ENCODE measurements at regions of chr10 and their contacts with region 1.

Region 1: GRCh38 chr10:116170815-116171250 is 102.2 kb downstream of the GFRA1 start:
- DNase-seq: no peak
- H3K4me3 ChIP-seq: no peak overlapping the region
- H3K27ac ChIP-seq: no peak overlapping the region
- H3K4me1 ChIP-seq: no peaks in the 10 kb centered on the region
- H3K27me3 ChIP-seq: no peaks in the 10 kb centered on the region
- CTCF ChIP-seq: no peak
- POLR2A ChIP-seq: no peak

Region 2: DNA sequence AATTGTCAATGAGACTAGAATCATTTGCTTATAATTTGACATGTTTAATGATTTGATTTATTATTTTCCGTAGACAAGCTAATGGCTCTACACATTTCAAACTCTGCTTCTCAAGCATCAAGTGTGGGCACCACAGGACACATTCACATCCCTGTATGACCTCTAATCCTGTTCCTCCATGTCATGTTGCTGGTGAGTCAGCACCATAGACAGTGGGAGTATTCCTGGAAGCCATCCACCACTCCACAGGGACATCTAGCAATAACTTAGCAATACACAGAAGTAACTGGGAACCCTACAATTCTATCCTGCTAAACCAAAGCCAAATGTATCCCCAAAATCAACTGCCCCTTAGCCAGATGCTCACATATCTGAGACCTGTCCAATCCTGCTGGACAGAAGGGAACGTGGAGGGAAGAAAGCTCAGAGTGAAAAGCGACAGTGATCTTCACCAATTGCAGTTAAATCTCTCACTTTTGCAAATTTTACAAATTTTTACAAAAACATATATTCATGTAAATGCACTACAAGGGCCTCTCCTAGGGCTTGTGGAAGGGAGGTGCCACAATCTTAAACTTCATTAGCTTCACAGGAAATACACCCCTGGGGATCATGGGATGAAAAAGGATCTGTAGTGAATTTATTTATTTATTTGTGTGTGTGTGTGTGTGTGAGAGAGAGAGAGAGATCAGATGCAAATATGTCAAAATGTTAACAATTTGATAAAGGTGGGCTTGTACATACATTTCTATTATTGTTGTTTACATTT is 24.3 kb before region 1 on chr10:
- intact Hi-C with region 1: no loop called
- DNase-seq: no peak
- H3K4me3 ChIP-seq: no peak overlapping the region
- H3K27ac ChIP-seq: no peak overlapping the region
- H3K4me1 ChIP-seq: no peaks in the 10 kb centered on the region
- H3K27me3 ChIP-seq: no peaks in the 10 kb centered on the region
- CTCF ChIP-seq: no peak
- POLR2A ChIP-seq: no peak

Region 3: GRCh38 chr10:116232613-116233012 is 61.8 kb after region 1 on chr10:
- intact Hi-C with region 1: loop called (anchors 2 kb)
- DNase-seq: no peak
- H3K4me3 ChIP-seq: no peak overlapping the region
- H3K27ac ChIP-seq: no peak overlapping the region
- H3K4me1 ChIP-seq: no peaks in the 10 kb centered on the region
- H3K27me3 ChIP-seq: no peaks in the 10 kb centered on the region
- CTCF ChIP-seq: no peak
- POLR2A ChIP-seq: no peak

Region 4: GRCh38 chr10:116809483-116810119 is 638.8 kb after region 1 on chr10:
- intact Hi-C with region 1: loop called (anchors 5 kb)
- DNase-seq: no peak
- H3K4me3 ChIP-seq: peak overlapping the region in 1 of 3 donors; percentile 19
- H3K27ac ChIP-seq: no peak overlapping the region
- H3K4me1 ChIP-seq: no peaks in the 10 kb centered on the region
- H3K27me3 ChIP-seq: peaks cover 0 to 24% of the 10 kb centered on the region in 2 donors
- CTCF ChIP-seq: no peak
- POLR2A ChIP-seq: no peak

Measured in breast epithelium (tissue), 4 donors.